ENCODE measurements at regions of chr9 and their contacts with region 1.

Region 1: DNA sequence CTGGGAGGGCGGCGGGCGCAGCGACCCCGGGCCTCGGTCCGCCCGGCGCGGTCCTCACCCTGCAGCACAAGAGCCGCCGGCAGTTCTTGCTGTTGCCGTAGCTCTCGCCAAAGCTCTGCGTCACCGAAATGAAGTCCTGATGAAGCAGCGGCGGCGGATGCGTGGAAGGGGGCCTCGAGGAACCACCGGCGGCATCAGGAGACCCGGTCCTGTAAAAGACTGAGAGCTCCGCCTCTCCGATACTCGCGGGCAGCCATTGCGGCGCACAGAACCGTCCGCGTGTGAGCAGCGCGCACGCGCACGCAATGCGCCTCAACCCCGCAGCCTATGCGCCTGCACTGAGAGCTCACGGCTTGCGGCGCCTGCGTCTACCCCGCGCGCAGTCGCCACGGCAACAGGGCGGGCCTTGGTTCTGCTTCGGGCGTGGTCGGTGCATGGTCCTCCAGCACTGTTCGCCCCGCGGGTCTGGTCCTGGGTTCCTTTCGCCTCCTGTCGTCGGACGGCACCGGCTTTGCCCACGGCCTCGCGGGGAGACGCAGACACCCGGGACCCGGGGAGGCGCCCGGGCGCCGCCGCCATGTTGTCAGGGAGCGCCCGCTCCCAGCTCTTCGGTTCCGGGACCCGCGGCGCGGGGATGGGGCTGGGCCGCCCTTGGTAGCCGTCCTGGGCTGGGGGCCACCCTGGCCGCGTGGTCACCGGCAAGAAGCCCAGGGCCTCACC is 9.3 kb upstream of the GRIN1 start:
- H3K4me3 ChIP-seq: peak overlapping the region; percentile 88
- H3K27ac ChIP-seq: peak overlapping the region; percentile 66
- H3K4me1 ChIP-seq: no peaks in the 10 kb centered on the region
- CTCF ChIP-seq: no peak

Region 2: GRCh38 chr9:136916330-136917184 is 213.1 kb before region 1 on chr9:
- CTCF ChIA-PET with region 1: no interaction called
- POLR2A ChIA-PET with region 1: no interaction called
- H3K4me3 ChIP-seq: no peak overlapping the region
- H3K27ac ChIP-seq: no peak overlapping the region
- H3K4me1 ChIP-seq: no peaks in the 10 kb centered on the region
- CTCF ChIP-seq: no peak

Region 3: GRCh38 chr9:137070201-137070905 is 59.3 kb before region 1 on chr9 and contains the start of gene SAPCD2:
- CTCF ChIA-PET with region 1: interaction called, 3 read pairs
- POLR2A ChIA-PET with region 1: interaction called, 11 read pairs
- H3K4me3 ChIP-seq: peak within 1 kb of the TSS; percentile 38
- H3K27ac ChIP-seq: peak within 1 kb of the TSS; percentile 71
- H3K4me1 ChIP-seq: peaks cover 10% of the 10 kb centered on the region; the same call in 1 of the 2 replicates
- CTCF ChIP-seq: no peak

Region 4: GRCh38 chr9:137099231-137099630 is 30.4 kb before region 1 on chr9:
- CTCF ChIA-PET with region 1: no interaction called
- POLR2A ChIA-PET with region 1: no interaction called
- H3K4me3 ChIP-seq: no peak overlapping the region
- H3K27ac ChIP-seq: no peak overlapping the region
- H3K4me1 ChIP-seq: no peaks in the 10 kb centered on the region
- CTCF ChIP-seq: no peak

Region 5: DNA sequence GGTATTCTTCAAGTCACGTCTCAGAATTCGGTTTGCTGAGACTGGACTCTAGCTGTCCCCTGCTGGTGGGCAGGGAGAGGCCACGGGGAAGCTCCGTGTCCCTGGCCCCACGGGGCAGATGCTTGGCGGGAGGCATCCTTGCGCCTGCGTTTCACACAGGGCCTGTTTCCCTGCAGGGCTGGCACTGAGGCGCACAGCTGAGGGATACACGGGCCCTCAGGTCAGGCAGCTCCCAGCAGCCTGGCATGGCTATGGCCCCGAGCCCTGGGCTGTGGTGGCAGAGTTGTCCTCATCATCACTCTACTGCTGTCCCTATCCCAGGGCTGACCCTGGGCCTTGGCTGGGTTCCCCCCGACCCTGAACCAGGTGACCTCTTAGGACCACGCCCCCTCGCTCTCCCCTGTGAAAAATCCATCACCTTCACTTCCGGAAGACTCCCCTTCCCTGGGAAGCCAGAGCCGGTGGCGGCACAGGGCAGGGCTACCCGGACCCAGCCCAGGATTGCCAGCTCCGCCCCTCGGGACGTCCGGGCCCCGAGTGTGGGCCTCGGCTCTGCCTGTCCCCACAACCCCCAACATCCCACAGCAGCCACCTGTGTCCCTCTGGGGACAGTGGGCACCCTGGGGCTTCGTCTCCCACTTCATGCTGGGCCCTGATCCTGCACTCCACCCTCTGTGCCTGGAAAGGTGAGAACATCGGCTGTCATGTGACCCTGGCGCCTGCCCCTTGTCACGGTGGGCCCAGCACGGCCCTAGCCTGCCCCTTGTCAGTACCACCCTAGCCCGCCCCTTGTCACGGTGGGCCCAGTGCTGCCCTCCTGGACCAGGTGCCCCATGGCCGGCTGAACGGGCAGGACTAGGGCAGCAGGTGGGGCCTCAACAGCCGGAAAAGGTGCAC is 20.1 kb before region 1 on chr9:
- CTCF ChIA-PET with region 1: no interaction called
- POLR2A ChIA-PET with region 1: no interaction called
- H3K4me3 ChIP-seq: no peak overlapping the region
- H3K27ac ChIP-seq: no peak overlapping the region
- H3K4me1 ChIP-seq: no peaks in the 10 kb centered on the region
- CTCF ChIP-seq: no peak

Region 6: DNA sequence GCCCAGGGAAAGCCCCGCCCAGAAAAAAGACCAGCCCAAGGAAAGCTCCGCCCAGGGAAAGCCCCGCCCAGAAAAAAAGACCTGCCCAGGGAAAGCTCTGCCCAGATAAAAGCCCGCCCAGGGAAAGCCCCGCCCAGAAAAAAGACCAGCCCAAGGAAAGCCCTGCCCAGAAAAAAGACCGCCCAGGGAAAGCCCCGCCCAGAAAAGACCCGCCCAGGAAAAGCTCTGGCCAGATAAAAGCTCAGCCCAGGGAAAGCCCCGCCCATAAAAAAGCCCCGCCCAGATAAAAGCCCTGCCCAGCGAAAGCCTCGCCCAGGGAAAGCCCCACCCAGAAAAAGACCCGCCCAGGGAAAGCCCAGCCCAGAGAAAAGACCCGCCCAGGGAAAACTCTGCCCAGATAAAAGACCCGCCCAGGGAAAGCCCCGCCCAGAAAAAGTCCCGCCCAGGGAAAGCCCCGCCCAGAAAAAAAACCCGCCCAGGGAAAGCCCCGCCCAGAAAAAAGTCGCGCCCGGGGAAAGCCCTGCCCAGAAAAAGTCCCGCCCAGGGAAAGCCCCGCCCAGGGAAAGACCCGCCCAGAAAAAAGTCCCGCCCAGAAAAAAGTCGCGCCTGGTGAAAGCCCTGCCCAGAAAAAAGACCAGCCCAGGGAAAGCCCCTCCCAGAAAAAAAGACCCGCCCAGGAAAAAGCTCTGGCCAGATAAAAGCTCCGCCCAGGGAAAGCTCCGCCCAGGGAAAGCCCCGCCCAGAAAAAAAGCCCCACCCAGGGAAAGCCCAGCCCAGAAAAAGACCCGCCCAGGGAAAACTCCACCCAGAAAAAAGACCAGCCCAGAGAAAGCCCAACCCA is 21.2 kb after region 1 on chr9:
- CTCF ChIA-PET with region 1: interaction called, 6 read pairs
- POLR2A ChIA-PET with region 1: interaction called, 52 read pairs
- H3K4me3 ChIP-seq: no peak overlapping the region
- H3K27ac ChIP-seq: no peak overlapping the region
- H3K4me1 ChIP-seq: no peaks in the 10 kb centered on the region
- CTCF ChIP-seq: no peak

Region 7: GRCh38 chr9:137168905-137169856 is 39.6 kb after region 1 on chr9:
- CTCF ChIA-PET with region 1: interaction called, 6 read pairs
- POLR2A ChIA-PET with region 1: interaction called, 53 read pairs
- H3K4me3 ChIP-seq: peak overlapping the region; percentile 40
- H3K27ac ChIP-seq: no peak overlapping the region; the same call in 1 of the 2 replicates
- H3K4me1 ChIP-seq: no peaks in the 10 kb centered on the region; the same call in 1 of the 2 replicates
- CTCF ChIP-seq: peak; percentile 64

Region 8: GRCh38 chr9:137200311-137201204 is 70.9 kb after region 1 on chr9 and contains the start of gene TPRN:
- CTCF ChIA-PET with region 1: no interaction called
- POLR2A ChIA-PET with region 1: interaction called, 42 read pairs
- H3K4me3 ChIP-seq: peak within 1 kb of the TSS; percentile 86
- H3K27ac ChIP-seq: peak within 1 kb of the TSS; percentile 57; the same call in 1 of the 2 replicates
- H3K4me1 ChIP-seq: peaks cover 9% of the 10 kb centered on the region
- CTCF ChIP-seq: no peak

Region 9: GRCh38 chr9:137302176-137302994 is 172.8 kb after region 1 on chr9 and contains the start of gene NRARP:
- CTCF ChIA-PET with region 1: no interaction called
- POLR2A ChIA-PET with region 1: interaction called, 11 read pairs
- H3K4me3 ChIP-seq: peak within 1 kb of the TSS; percentile 73
- H3K27ac ChIP-seq: peak within 1 kb of the TSS; percentile 91
- H3K4me1 ChIP-seq: peaks cover 15% of the 10 kb centered on the region
- CTCF ChIP-seq: peak; percentile 84

Measured in HEK293 (cell line).